BJ (cell line): ENCODE measurements at regions of chr15 and their contacts with region 1.

Region 1: DNA sequence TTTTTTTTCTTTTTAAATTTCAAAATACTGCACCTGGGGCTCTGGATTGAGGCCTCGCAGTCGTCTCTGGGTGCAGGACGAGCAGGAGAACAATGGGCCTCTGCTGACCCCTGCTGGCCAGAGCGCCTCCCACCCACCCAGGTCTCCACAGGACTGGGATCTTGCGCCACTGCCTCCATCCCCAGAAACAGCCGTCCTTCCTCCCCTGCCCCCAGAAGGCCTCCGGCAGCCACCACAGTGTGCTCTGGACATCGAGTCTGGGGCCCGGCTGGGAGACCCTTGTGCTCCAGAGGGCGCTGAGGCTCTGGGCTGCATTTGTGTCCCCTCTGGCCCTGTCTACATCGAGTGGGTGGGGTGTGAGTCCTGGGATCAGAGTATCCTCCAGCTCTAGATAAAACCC is 6.6 kb upstream of the ACSBG1 start:
- DNase-seq: no peak
- H3K4me3 ChIP-seq: no peak overlapping the region
- H3K27me3 ChIP-seq: peaks cover 3% of the 10 kb centered on the region
- CTCF ChIP-seq: peak; percentile 93

Region 2: GRCh38 chr15:77959432-77959879 is 281.6 kb before region 1 on chr15:
- CTCF ChIA-PET with region 1: interaction called, 15 read pairs
- POLR2A ChIA-PET with region 1: no interaction called
- DNase-seq: no peak
- H3K4me3 ChIP-seq: 0 out of 2 replicates have a peak overlapping the region, but pooled peaks have one; percentile 2
- H3K27me3 ChIP-seq: peaks cover 7% of the 10 kb centered on the region
- CTCF ChIP-seq: peak; percentile 94

Region 3: DNA sequence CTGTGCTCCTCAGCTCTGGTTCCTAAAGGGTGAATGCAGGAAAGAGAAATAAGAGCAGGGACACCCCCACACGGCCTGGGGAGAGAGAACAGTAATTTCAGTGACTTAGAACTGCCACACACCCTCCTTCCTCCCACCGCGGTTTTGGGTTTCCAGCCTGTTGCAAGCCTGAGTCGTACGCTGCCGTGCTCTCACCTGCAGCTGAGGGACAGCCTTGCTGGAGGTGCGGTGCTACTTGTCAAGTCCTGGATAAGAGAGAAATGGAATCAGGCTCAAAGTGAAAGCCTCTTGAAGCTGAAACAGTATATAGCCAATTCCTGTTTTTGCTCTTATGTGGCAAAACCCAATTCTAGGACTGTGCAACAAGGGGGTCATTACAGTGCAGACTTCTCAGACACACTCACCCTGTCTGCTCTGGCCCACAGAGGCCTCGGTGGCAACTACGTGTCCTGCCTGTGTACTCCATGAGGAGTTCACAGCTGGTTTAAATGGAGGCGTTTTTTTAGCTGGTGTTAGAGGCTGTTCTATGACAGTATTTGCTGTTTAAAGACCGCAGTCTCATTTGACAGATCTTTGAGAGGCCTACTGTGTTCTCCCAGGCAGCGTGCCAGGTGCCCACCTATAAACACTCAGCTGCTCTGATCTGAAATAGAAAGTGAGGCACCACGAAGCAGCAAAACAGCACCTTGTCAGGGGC is 206.4 kb before region 1 on chr15:
- CTCF ChIA-PET with region 1: no interaction called
- POLR2A ChIA-PET with region 1: no interaction called
- DNase-seq: no peak
- H3K4me3 ChIP-seq: no peak overlapping the region
- H3K27me3 ChIP-seq: no peaks in the 10 kb centered on the region
- CTCF ChIP-seq: no peak

Region 4: GRCh38 chr15:78131295-78132061 is 109.5 kb before region 1 on chr15 and contains the start of gene CIB2:
- CTCF ChIA-PET with region 1: interaction called, 31 read pairs
- POLR2A ChIA-PET with region 1: no interaction called
- DNase-seq: no peak
- H3K4me3 ChIP-seq: peak within 1 kb of the TSS; percentile 66
- H3K27me3 ChIP-seq: no peaks in the 10 kb centered on the region
- CTCF ChIP-seq: peak; percentile 28; the same call in 1 of the 2 replicates
- polyA plus RNA-seq, gene CIB2: 4.5 and 7.4 TPM in 2 replicates

Region 5: DNA sequence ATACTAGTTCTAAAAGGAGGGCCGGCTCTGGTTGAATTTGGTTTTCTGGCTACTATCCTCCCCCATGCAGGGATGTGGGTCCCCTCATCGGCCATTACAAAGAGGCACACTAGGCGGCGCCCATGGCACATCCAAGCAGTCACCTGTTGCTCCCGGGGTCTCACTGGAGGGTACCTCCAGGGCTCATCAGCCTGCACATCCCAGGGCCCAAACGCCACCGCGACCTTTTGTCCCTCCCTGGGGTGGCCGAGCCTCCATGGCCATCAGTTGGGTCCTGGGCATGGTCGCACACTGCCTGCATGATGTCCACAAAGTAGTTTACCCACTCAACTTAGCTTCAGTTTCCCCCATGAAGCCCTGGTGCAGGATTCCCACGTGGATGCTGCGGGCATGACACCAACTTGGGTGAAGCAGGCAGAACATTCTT is 63.5 kb before region 1 on chr15:
- CTCF ChIA-PET with region 1: interaction called, 99 read pairs
- POLR2A ChIA-PET with region 1: no interaction called
- DNase-seq: no peak
- H3K4me3 ChIP-seq: no peak overlapping the region
- H3K27me3 ChIP-seq: peaks cover 1% of the 10 kb centered on the region; the same call in 1 of the 2 replicates
- CTCF ChIP-seq: peak; percentile 84

Region 6: GRCh38 chr15:78212546-78213424 is 28.2 kb before region 1 on chr15:
- CTCF ChIA-PET with region 1: interaction called, 10 read pairs
- POLR2A ChIA-PET with region 1: no interaction called
- DNase-seq: peak; percentile 31
- H3K4me3 ChIP-seq: no peak overlapping the region
- H3K27me3 ChIP-seq: 0 out of 2 replicates have a peak, but pooled peaks cover 2% of the 10 kb centered on the region
- CTCF ChIP-seq: no peak

Region 7: DNA sequence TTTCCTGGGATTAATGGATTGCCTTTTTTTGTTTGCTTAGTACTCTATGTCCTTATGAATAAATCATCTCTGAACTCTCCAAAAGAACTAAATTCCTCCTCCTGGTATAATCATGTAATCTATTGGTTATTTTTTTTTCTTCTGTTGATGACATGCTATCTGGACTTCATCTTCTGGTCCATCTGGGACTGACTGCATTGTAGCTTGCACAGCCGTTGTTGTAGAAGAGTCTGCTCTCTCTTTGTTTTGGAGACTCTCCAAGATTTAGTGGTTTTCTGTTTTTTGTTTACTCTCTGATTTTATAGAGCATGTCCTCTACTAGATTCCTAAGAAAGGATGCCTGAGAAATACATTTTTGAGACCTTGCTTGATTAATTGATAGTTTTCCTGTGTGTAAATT is 216.1 kb after region 1 on chr15:
- CTCF ChIA-PET with region 1: no interaction called
- POLR2A ChIA-PET with region 1: no interaction called
- DNase-seq: peak; percentile 35
- H3K4me3 ChIP-seq: no peak overlapping the region
- H3K27me3 ChIP-seq: no peaks in the 10 kb centered on the region
- CTCF ChIP-seq: no peak

Region 8: DNA sequence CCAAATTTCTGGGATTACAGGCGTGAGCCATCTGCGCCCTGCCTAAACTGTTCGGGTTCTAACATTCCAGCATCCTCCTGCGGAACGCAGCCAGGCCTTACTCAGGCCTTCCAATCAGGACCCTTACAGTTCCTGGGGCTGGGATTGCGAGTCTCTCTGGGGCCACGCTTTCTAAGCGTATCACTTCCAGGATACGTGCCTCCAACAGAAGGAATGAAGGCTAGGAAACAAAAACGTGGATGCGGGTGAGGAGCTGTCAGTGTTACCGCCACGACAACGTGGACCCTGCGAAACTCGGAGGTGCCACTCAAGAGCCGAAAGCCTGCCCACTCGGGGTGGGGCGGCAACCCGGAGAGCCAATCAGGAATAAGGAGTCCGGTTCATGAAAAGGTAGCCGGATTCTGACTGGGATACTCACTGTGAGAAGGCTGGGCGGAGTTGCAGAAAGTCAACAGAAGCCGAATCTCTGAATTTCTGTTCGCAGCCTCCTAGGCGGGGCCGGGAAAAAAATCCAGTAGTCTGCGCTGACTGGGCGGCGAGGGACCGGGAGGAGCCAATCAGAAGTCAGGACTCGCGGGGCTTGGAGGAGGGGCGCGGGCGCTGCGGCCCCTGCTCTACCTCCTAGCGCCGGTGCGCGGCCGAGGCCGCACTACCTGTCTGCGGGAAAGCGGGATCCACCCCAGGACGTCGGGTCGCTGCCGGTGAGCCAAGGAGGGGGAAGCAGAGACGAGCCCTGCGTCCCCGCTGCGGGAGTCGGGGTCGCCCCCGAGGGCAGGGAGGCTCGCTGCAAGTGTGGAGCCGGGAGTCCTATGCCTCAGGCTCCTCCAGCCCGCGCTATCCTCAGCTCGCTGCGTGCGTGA is 266.2 kb after region 1 on chr15 and contains the start of gene HYKK:
- CTCF ChIA-PET with region 1: no interaction called
- POLR2A ChIA-PET with region 1: no interaction called
- DNase-seq: peak; percentile 91
- H3K4me3 ChIP-seq: peak within 1 kb of the TSS; percentile 77
- H3K27me3 ChIP-seq: no peaks in the 10 kb centered on the region
- CTCF ChIP-seq: no peak
- polyA plus RNA-seq, gene HYKK: 3.2 and 4.6 TPM in 2 replicates